ENCODE measurements at regions of chr16 and their contacts with region 1.

Region 1: GRCh38 chr16:70534971-70535370 is 11.4 kb downstream of the SF3B3 start:
- DNase-seq: no peak
- ATAC-seq: no peak
- H3K4me3 ChIP-seq: no peak overlapping the region
- H3K27ac ChIP-seq: no peak overlapping the region
- H3K4me1 ChIP-seq: no peaks in the 10 kb centered on the region
- H3K27me3 ChIP-seq: no peaks in the 10 kb centered on the region

Region 2: GRCh38 chr16:70646260-70647241 is 111.6 kb after region 1 on chr16 and contains the start of gene IL34:
- intact Hi-C with region 1: loop called in 2 of 4 experiments (anchors 5 to 10 kb)
- DNase-seq: peak; percentile 33 to 73 (median 72)
- ATAC-seq: peak; percentile 59 to 74
- H3K4me3 ChIP-seq: no peak within 1 kb of the TSS
- H3K27ac ChIP-seq: no peak within 1 kb of the TSS
- H3K4me1 ChIP-seq: no peaks in the 10 kb centered on the region
- H3K27me3 ChIP-seq: no peaks in the 10 kb centered on the region
- total RNA-seq, gene IL34: 0.74 to 2.1 (median 1.5) TPM

Measured in right cardiac atrium (tissue), 5 donors.